ENCODE measurements at regions of chr14 and their contacts with region 1.

Region 1: GRCh38 chr14:105020815-105021655 is at the start of gene CDCA4:
- DNase-seq: peak; percentile 96
- H3K4me3 ChIP-seq: peak within 1 kb of the TSS; percentile 82 to 97 (median 95)
- H3K27ac ChIP-seq: peak within 1 kb of the TSS; percentile 94
- H3K4me1 ChIP-seq: peaks cover 68% of the 10 kb centered on the region
- H3K27me3 ChIP-seq: no peaks in the 10 kb centered on the region
- CTCF ChIP-seq: no peak
- total RNA-seq, gene CDCA4: 38.2 to 61.7 TPM

Region 2: GRCh38 chr14:104917993-104918392 is 103.0 kb before region 1 on chr14:
- CTCF ChIA-PET with region 1: no interaction called
- dilution Hi-C with region 1: loop called (anchors 5 kb)
- in situ Hi-C with region 1: no loop called
- intact Hi-C with region 1: no loop called
- DNase-seq: no peak
- H3K4me3 ChIP-seq: no peak overlapping the region
- H3K27ac ChIP-seq: no peak overlapping the region
- H3K4me1 ChIP-seq: no peaks in the 10 kb centered on the region
- H3K27me3 ChIP-seq: peaks cover 4% of the 10 kb centered on the region
- CTCF ChIP-seq: no peak

Region 3: DNA sequence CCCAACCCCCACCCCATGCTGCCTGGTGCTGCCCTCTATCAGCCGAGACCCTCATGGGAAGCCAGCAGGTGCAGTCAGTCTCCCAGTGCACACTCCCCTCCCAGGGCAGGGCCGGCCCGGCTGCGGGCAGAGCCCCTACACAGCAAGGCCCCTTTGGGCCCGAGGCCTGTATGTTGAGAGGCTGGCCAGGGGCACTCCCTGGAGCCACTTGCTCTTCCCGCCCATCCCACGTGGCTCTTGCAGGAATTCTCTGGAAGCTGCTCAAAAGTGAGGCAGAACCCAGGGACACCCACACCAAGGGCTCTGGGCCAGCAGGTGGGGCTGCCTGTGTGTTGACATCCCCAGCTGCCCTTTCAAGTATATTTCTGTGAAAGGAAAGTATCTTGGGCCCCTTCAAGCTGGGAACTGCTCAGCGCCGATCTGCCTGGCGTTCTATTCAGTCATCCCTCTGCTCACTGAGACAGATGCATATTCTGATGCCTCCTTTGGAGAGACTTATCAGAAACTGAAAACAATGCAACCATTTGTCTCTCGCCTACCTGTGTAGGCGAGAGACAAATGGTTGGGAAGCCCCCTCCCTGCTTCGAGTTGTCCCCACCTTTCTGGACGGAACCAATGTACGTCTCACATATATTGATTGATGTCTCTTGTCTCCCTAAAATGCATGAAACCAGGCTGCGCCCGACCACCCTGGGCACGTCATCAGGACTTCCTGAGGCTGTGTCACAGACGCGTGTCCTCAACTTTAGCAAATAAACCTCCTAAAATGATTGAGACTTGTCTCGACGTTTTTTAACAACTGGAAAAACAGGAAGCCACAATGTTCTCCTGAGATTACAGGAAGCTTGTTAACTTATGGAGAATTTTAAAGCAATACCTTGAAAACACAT is 38.2 kb after region 1 on chr14:
- CTCF ChIA-PET with region 1: no interaction called
- dilution Hi-C with region 1: loop called (anchors 5 kb)
- in situ Hi-C with region 1: no loop called
- intact Hi-C with region 1: no loop called
- DNase-seq: no peak
- H3K4me3 ChIP-seq: no peak overlapping the region
- H3K27ac ChIP-seq: no peak overlapping the region
- H3K4me1 ChIP-seq: no peaks in the 10 kb centered on the region
- H3K27me3 ChIP-seq: peaks cover 2% of the 10 kb centered on the region
- CTCF ChIP-seq: no peak

Region 4: DNA sequence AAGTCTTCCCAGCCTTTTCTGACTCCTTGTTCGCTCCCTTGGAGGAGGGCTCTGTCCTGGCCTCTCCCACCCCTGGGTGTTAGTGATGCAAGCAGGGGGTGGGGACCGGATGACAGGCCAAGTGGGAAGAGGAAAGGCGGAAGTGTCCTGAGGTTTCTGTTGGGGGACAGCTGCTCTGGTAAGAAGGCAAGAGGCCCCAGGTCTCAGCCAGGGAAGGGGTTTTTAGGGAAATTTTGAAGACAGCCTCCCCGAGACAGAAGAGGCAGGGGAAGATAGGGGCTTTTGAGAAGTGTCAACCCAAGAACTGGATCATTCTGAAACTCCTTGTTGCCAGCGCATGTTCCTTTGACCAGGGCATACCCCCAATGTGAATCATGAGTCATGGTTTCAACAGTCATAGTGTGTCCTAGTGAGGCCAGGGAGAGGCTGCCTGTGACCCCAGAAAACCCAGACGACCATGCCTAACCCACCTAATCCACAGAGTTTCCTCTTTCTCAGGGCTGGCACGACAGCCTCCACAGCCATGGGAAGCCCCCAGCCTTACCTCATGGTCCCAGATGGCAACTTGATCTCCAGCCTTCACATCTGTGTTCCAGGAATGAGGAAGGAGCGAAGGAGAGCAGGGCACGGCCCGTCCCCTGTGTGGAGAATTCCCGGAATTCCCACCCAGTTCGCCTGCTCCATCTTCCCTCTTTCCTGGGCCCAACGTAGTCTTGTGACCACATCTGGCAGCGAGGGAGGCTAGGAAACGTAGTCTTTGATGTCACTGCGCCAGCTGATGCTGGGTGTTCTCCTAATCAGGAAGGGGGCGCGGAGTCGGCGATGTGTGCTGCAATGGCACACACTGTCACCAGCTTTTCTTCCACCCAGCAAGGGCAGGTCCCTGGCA is 49.1 kb after region 1 on chr14:
- CTCF ChIA-PET with region 1: no interaction called
- dilution Hi-C with region 1: no loop called
- in situ Hi-C with region 1: no loop called
- intact Hi-C with region 1: no loop called
- DNase-seq: no peak
- H3K4me3 ChIP-seq: no peak overlapping the region
- H3K27ac ChIP-seq: no peak overlapping the region
- H3K4me1 ChIP-seq: peaks cover 15% of the 10 kb centered on the region
- H3K27me3 ChIP-seq: no peaks in the 10 kb centered on the region
- CTCF ChIP-seq: no peak

Region 5: DNA sequence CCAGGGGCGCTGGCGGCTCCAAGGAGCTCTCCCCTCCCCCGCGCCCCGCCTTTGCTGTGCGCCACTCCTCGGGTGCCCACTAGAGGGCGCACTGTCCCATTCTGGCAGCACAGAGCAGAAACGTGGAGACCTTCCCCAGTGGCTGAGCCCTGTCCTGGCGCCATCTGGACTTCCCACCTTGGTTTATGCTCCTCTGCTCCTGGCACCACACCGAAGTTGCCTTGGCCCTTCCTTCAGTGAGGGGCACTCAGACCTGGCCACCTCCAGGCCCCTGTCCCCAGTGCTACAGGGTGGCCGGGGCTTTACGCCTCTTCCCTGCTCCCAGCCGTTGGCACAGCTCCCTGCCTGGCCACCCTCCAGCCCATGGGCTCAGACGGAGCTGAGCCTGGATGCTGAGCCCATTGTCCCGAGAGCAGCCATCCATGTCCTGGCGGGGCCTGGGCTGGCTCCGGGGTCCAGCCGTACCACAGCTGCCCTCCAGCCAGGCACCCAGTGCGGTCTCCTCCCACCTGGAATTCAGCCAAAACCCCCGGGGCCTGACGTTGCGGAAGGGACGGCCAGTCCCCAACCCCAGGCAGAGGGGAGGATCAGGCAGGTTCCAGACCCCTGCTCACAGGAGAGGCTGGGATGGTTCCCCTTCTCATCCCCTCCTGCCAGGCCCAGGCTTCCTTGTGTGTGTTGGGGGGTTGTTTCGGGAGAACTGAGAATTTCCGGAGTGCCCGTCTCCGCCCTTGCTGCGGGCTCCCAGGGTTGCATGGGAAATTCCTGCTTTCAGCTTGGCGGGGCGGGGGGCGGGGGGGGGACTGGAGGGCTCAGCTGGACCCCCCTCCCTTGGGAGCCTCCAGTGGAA is 460.1 kb after region 1 on chr14:
- CTCF ChIA-PET with region 1: no interaction called
- dilution Hi-C with region 1: no loop called
- in situ Hi-C with region 1: no loop called
- intact Hi-C with region 1: loop called (anchors 5 kb)
- DNase-seq: peak; percentile 80
- H3K4me3 ChIP-seq: peak overlapping the region in 2 of 3 experiments; percentile 8 to 30
- H3K27ac ChIP-seq: peak overlapping the region; percentile 96
- H3K4me1 ChIP-seq: peaks cover 50% of the 10 kb centered on the region
- H3K27me3 ChIP-seq: no peaks in the 10 kb centered on the region
- CTCF ChIP-seq: peak; percentile 93 to 99

Measured in mammary epithelial cell (primary cell).